Activated CD4-positive, alpha-beta T cell treated with anti-CD3 and anti-CD28 coated beads, Interleukin-2, amount 10 ng/mL, durations not matched to agents 24 days and 14 days (primary cell): ENCODE measurements at regions of chr12 and their contacts with region 1.

Region 1: GRCh38 chr12:12008931-12009611 is 61.7 kb upstream of the BCL2L14 start:
- DNase-seq: peak; percentile 89
- H3K4me3 Mint-ChIP-seq: peak overlapping the region; percentile 74
- H3K27ac Mint-ChIP-seq: peak overlapping the region; percentile 97
- H3K4me1 Mint-ChIP-seq: peaks cover 73% of the 10 kb centered on the region
- H3K27me3 Mint-ChIP-seq: peaks cover 2% of the 10 kb centered on the region

Region 2: DNA sequence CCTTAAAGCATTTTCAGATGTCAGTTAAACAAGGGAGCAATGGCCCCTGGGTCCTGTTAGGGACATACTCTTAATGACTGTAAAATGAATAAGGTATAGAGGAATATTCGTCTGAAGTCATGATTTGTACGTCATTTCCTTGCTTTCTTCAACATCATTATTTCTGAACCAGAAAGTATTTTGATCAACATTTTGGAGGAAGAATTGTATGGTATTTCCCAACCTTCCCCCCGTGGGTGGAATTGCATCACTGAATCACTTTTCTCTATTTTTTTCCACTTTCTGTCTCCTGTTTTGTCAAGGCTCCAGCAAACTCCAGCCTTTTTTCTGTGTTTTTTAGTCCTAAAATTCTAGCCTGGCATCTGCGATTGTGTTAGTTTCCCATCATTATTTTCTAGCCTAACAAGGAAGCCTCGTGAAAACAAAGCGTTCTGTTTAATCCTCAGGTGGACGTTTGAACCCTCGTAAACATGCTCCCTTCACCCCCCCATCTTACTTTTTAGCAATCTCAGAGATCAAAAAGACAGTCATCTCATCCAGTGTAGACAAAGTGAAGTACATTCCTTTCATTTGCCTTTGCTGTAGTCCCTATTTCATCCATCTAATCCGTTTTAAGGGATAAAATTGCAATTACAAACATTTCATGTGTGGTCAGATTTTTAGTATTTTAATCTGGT is 297.3 kb before region 1 on chr12:
- intact Hi-C with region 1: loop called (anchors 5 kb)
- DNase-seq: no peak
- H3K4me3 Mint-ChIP-seq: no peak overlapping the region
- H3K27ac Mint-ChIP-seq: peak overlapping the region; percentile 10
- H3K4me1 Mint-ChIP-seq: peaks cover 55% of the 10 kb centered on the region
- H3K27me3 Mint-ChIP-seq: no peaks in the 10 kb centered on the region

Region 3: DNA sequence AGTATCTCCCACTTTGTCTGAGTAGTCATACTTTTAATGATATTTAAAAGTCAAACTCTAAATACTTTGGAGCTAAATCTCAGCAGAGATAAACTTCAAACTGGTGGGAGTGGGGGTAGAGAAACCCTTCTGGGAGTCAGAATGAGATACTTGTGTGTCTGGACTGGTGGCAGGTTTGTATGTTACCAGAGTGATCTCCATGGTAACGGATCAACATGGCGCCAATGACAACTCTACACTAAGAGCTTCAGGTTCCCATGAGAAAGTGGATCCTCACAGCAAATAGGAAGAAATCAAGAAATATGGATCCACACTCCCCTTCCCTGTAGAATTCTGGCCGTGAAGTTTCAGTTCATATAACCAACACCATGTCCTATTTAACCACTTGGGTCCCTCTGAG is 237.7 kb before region 1 on chr12:
- intact Hi-C with region 1: loop called (anchors 1 kb)
- DNase-seq: peak; percentile 65
- H3K4me3 Mint-ChIP-seq: peak overlapping the region; percentile 26
- H3K27ac Mint-ChIP-seq: peak overlapping the region; percentile 97
- H3K4me1 Mint-ChIP-seq: peaks cover 78% of the 10 kb centered on the region
- H3K27me3 Mint-ChIP-seq: no peaks in the 10 kb centered on the region

Region 4: GRCh38 chr12:11901701-11902524 is 107.2 kb before region 1 on chr12:
- intact Hi-C with region 1: loop called (anchors 1 kb)
- DNase-seq: peak; percentile 72
- H3K4me3 Mint-ChIP-seq: peak overlapping the region; percentile 58
- H3K27ac Mint-ChIP-seq: peak overlapping the region; percentile 97
- H3K4me1 Mint-ChIP-seq: peaks cover 62% of the 10 kb centered on the region
- H3K27me3 Mint-ChIP-seq: no peaks in the 10 kb centered on the region

Region 5: DNA sequence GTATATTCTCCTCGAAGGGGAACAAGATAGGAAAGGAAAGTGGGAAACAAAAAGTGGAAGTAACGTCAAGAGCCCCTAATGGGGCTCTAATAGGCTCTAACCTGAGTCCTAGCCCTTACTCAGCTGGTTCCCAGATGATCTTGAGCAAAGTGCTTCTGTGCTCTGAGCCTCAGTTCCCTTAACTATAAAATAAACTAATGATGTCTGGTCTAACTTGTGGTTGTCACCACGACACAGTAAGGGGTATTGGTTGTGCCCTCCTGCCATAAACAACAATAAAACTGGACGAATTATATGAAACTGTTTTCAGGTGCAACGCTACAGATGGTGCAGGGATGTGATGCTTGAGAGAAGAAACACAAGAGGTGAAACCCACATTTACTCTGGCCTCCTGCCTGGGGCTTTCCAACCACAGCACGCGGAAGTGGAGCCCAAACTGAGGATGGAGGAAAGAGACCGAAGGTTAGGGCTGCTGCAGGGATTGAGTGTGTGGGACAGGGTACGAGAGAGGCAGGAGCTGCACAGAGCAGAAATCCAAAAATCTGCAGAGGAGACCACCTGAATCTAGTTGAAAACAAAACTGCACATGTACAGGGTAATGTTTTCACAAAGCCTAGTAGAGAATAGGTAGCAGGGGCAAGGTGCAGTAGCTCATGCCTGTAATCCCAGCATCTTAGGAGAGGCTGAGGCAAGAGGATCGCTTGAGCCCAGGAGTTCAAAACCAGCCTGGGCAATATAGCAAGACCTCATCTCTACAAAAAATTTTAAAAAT is 16.0 kb after region 1 on chr12:
- intact Hi-C with region 1: loop called (anchors 1 kb)
- DNase-seq: peak; percentile 88
- H3K4me3 Mint-ChIP-seq: peak overlapping the region; percentile 30
- H3K27ac Mint-ChIP-seq: peak overlapping the region; percentile 87
- H3K4me1 Mint-ChIP-seq: peaks cover 73% of the 10 kb centered on the region
- H3K27me3 Mint-ChIP-seq: no peaks in the 10 kb centered on the region

Region 6: DNA sequence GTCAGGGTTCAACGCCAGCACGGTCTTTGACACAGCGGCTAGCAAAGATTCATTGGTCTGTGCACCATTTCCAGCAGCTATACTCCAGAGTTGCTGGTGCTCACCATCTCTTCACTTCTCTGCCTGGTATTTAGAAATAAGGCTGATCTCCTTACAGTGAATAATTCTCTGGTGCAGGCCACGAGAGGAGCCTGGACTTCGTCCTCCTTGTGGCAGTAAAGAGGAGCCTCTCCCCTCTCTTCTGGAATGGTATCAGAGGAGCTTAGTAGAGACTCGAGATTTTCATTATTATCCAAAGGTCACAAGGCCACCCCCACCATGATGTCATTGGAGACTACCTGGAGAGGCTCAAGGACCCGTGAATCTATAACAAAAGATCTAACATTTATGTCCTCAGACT is 30.8 kb after region 1 on chr12:
- intact Hi-C with region 1: no loop called
- DNase-seq: no peak
- H3K4me3 Mint-ChIP-seq: no peak overlapping the region
- H3K27ac Mint-ChIP-seq: no peak overlapping the region
- H3K4me1 Mint-ChIP-seq: peaks cover 10% of the 10 kb centered on the region
- H3K27me3 Mint-ChIP-seq: peaks cover 3% of the 10 kb centered on the region

Region 7: GRCh38 chr12:12716793-12717585 is 707.9 kb after region 1 on chr12 and contains the start of gene CDKN1B:
- intact Hi-C with region 1: loop called (anchors 2 kb)
- DNase-seq: peak; percentile 94
- H3K4me3 Mint-ChIP-seq: peak within 1 kb of the TSS; percentile 97
- H3K27ac Mint-ChIP-seq: peak within 1 kb of the TSS; percentile 99
- H3K4me1 Mint-ChIP-seq: peaks cover 57% of the 10 kb centered on the region
- H3K27me3 Mint-ChIP-seq: no peaks in the 10 kb centered on the region
- total RNA-seq, gene CDKN1B: 47.4 and 48.5 TPM in 2 replicates